ENCODE measurements at regions of chr7 and their contacts with region 1.

Region 1: GRCh38 chr7:149883452-149883861 is 9.7 kb downstream of the ATP6V0E2 start:
- DNase-seq: peak; percentile 85
- ATAC-seq: peak; percentile 94
- H3K4me3 Mint-ChIP-seq: no peak overlapping the region
- H3K27ac Mint-ChIP-seq: peak overlapping the region; percentile 52
- H3K4me1 Mint-ChIP-seq: peaks cover 4% of the 10 kb centered on the region
- H3K27me3 Mint-ChIP-seq: no peaks in the 10 kb centered on the region
- CTCF ChIP-seq: peak; percentile 58

Region 2: GRCh38 chr7:149846436-149847046 is 36.9 kb before region 1 on chr7:
- CTCF ChIA-PET with region 1: no interaction called
- POLR2A ChIA-PET with region 1: no interaction called
- intact Hi-C with region 1: no loop called
- DNase-seq: no peak
- ATAC-seq: no peak
- H3K4me3 Mint-ChIP-seq: no peak overlapping the region
- H3K27ac Mint-ChIP-seq: no peak overlapping the region
- H3K4me1 Mint-ChIP-seq: peaks cover 28% of the 10 kb centered on the region
- H3K27me3 Mint-ChIP-seq: no peaks in the 10 kb centered on the region
- CTCF ChIP-seq: no peak

Region 3: DNA sequence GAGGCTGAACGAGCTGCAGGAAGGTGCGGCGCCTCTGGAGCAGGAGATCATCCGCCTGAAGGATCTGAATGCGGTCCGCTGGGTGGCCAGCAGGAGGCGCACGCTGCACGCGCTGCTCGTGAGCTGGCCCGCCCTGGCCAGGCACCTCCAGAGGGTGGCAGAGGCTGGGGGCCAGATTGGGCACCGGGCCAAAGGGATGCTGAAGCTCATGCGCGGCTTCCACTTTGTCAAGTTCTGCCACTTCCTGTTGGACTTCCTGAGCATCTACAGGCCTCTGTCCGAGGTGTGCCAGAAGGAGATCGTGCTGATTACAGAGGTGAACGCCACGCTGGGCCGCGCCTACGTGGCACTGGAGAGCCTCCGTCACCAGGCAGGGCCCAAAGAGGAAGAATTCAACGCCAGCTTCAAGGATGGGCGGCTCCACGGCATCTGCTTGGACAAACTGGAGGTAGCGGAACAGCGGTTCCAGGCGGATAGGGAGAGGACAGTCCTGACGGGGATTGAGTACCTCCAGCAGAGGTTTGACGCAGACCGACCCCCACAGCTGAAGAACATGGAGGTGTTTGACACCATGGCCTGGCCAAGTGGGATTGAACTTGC is 21.9 kb before region 1 on chr7:
- CTCF ChIA-PET with region 1: interaction called, 15 read pairs
- POLR2A ChIA-PET with region 1: no interaction called
- intact Hi-C with region 1: no loop called
- DNase-seq: peak; percentile 39
- ATAC-seq: no peak
- H3K4me3 Mint-ChIP-seq: no peak overlapping the region
- H3K27ac Mint-ChIP-seq: no peak overlapping the region
- H3K4me1 Mint-ChIP-seq: peaks cover 51% of the 10 kb centered on the region
- H3K27me3 Mint-ChIP-seq: no peaks in the 10 kb centered on the region
- CTCF ChIP-seq: peak; percentile 47

Measured in activated CD8-positive, alpha-beta T cell treated with anti-CD3 and anti-CD28 coated beads for 36 hours (primary cell).